ENCODE measurements at regions of chr1 and their contacts with region 1.

Region 1: GRCh38 chr1:182143154-182143657 is 81.7 kb upstream of the ZNF648 start:
- DNase-seq: peak; percentile 94 to 95
- ATAC-seq: peak; percentile 65 to 93 (median 83)
- H3K4me3 ChIP-seq: no peak overlapping the region
- H3K27ac ChIP-seq: peak overlapping the region; percentile 69 to 98 (median 84)
- H3K4me1 ChIP-seq: peaks cover 8 to 52% (median 19%) of the 10 kb centered on the region in 9 donors
- H3K27me3 ChIP-seq: peaks cover 0 to 3% (median 0%) of the 10 kb centered on the region in 7 donors
- CTCF ChIP-seq: peak; percentile 93 to 99 (median 96)

Region 2: DNA sequence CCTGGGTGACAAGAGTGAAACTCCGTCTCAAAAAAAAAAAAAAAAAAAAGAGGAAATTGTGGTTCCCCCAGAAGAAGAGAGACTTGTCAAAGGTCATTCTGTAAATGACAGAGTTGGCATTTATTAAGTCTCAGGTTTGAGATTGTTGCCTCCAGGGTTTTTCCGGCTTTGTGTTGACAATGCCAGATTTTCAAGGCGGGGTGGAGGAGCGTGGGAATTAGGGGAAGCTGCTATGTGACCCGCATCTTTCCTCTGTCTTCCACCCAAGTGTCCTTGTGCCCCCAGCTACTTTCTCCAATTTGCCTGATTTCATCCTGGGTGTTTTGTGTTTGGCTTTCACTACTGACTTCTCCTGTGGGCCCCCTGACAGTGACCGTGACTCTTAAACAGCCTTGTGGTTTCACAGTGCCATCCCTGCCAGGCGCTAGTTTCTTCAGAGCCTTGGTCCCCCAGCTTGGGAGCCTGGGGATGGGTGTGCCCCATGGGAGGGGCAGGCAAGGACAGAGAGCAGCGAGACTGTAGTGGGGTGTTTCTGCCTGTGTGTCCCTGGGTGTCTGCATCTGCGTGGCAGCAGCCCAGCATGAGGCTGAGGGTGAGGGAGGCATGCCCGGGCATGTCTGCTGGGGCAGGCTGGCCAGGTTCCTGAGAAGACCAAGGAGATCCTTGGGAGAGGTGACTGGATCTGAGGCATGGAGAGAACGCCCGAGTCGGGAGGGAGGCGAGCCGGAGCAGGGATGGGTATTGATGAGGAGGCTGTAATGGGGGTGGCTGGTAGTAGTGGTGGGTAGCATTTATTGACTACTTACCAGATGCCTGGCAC is 1008.5 kb before region 1 on chr1:
- intact Hi-C with region 1: no loop called
- DNase-seq: peak in 1 of 2 donors; percentile 26
- ATAC-seq: peak in 7 of 8 donors; percentile 15 to 50 (median 25)
- H3K4me3 ChIP-seq: peak overlapping the region in 1 of 10 donors; percentile 16
- H3K27ac ChIP-seq: peak overlapping the region in 8 of 10 donors; percentile 9 to 87 (median 42)
- H3K4me1 ChIP-seq: peaks cover 20 to 66% (median 42%) of the 10 kb centered on the region in 9 donors
- H3K27me3 ChIP-seq: no peaks in the 10 kb centered on the region
- CTCF ChIP-seq: no peak

Region 3: GRCh38 chr1:182198049-182198501 is 54.9 kb after region 1 on chr1:
- intact Hi-C with region 1: loop called in 3 of 10 experiments (anchors 5 to 10 kb)
- DNase-seq: no peak
- ATAC-seq: peak in 1 of 8 donors; percentile 49
- H3K4me3 ChIP-seq: no peak overlapping the region
- H3K27ac ChIP-seq: peak overlapping the region in 2 of 10 donors; percentile 4 to 70
- H3K4me1 ChIP-seq: peaks cover 0 to 31% (median 12%) of the 10 kb centered on the region in 9 donors
- H3K27me3 ChIP-seq: no peaks in the 10 kb centered on the region
- CTCF ChIP-seq: peak in 5 of 9 donors; percentile 12 to 37 (median 28)

Region 4: DNA sequence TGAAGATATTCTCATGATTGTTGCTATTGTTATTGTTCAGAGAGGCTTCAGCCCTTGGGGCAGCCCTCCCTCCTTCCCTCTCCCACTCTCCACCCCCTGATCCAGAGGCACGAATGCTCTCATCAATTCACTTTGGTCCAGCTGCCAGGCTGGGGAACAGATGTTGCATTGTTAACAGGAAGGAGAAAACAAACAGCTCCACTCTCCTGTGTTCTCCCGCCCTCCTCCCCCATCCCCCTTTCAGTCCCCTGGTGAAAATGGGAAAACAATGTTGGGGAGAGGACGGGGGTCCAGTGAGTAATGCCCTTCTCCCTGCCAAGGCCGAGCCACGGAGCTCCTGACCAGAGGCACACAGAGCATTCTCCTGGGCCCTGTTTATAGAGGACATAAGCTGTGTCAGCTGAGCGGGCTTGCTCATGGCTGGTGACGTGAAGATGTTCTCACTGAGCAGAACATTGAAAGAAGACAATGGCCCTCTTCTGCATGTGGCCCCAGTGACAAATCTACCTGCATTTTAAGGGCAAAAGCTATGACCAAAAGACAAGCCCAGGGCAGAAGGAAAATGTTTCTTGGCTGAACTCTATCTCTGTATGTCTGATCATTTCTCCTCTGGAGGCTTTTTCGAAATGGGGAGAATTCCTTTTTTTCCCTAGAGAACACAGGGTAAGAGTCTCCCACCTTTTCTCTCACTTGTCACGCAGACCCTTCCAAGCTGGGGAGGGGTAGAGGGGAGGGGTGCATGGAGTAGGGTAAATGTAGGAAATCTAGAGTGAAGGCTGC is 136.7 kb after region 1 on chr1:
- intact Hi-C with region 1: loop called in 2 of 10 experiments (anchors 10 kb)
- DNase-seq: peak in 1 of 2 donors; percentile 8
- ATAC-seq: peak; percentile 39 to 75 (median 48)
- H3K4me3 ChIP-seq: no peak overlapping the region
- H3K27ac ChIP-seq: peak overlapping the region in 2 of 10 donors; percentile 3 to 10
- H3K4me1 ChIP-seq: peaks cover 0 to 24% (median 3%) of the 10 kb centered on the region in 9 donors
- H3K27me3 ChIP-seq: no peaks in the 10 kb centered on the region
- CTCF ChIP-seq: no peak

Region 5: GRCh38 chr1:182301467-182302198 is 158.4 kb after region 1 on chr1:
- intact Hi-C with region 1: loop called in 2 of 10 experiments (anchors 5 kb)
- DNase-seq: peak; percentile 37 to 48
- ATAC-seq: peak; percentile 75 to 89 (median 82)
- H3K4me3 ChIP-seq: no peak overlapping the region
- H3K27ac ChIP-seq: peak overlapping the region in 5 of 10 donors; percentile 21 to 58 (median 45)
- H3K4me1 ChIP-seq: peaks cover 0 to 46% (median 5%) of the 10 kb centered on the region in 9 donors
- H3K27me3 ChIP-seq: no peaks in the 10 kb centered on the region
- CTCF ChIP-seq: peak in 3 of 9 donors; percentile 17 to 36 (median 36)

Region 6: DNA sequence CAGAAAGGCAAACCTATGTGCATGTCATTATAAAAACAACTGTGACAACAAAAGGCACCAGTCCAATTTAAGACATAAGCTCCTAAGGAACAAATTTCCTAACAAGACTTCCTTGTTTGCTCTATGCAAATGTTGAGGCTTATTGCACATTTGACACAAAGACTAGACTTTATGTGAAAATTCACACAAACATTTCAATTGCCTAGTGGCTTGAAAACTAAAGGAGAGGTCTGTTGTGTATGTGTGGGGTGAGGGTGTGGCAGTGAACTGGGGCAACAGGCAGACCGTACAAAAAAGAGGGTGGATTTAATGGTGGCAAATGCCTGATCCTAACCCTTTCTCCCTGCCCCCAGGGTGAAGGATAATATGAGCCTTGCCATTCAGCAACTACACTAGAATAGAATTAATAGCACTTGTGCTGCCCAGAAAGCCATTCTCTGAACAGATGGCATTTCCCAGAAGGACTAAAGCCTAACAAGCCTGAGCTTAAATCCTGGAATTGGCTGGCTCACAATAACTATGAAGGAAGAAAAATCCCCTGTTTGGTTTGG is 174.5 kb after region 1 on chr1:
- intact Hi-C with region 1: loop called in 1 of 10 experiments (anchors 10 kb)
- DNase-seq: no peak
- ATAC-seq: no peak
- H3K4me3 ChIP-seq: no peak overlapping the region
- H3K27ac ChIP-seq: peak overlapping the region in 1 of 10 donors; percentile 13
- H3K4me1 ChIP-seq: peaks cover 0 to 15% (median 4%) of the 10 kb centered on the region in 9 donors
- H3K27me3 ChIP-seq: no peaks in the 10 kb centered on the region
- CTCF ChIP-seq: no peak

Region 7: DNA sequence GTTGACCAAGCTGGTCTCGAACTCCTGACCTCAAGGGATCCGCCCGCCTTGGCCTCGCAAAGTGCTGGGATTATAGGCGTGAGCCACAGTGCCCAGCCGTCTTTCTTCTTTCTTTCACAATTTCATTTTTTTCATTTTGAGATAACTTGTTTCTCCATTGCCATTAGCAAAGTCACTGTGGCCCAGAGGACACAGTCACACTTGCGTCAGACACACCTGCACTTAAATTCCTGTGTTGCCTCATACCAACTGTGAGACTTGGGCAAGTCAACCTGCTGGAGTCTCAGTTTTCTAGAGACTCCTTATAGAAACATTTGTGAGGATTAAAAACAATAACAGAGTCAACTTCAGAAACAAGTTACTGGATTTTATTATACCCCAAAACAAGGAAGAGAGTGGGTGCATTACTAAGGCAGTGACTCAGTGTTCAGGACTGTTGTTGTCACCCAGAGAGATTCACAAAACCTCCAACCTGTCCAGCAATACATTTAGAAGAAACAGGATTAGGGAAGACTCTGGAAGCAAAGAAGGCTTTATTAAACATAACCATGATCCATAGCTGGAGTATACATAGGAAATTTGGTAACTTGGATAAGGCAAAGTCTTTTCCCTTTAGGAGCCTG is 254.7 kb after region 1 on chr1:
- intact Hi-C with region 1: loop called (anchors 1 to 2 kb)
- DNase-seq: no peak
- ATAC-seq: no peak
- H3K4me3 ChIP-seq: no peak overlapping the region
- H3K27ac ChIP-seq: peak overlapping the region in 2 of 10 donors; percentile 4 to 39
- H3K4me1 ChIP-seq: peaks cover 0 to 35% (median 19%) of the 10 kb centered on the region in 9 donors
- H3K27me3 ChIP-seq: no peaks in the 10 kb centered on the region
- CTCF ChIP-seq: no peak

Measured in heart right ventricle (tissue), 16 donors.